ENCODE measurements at regions of chr3 and their contacts with region 1.

Region 1: DNA sequence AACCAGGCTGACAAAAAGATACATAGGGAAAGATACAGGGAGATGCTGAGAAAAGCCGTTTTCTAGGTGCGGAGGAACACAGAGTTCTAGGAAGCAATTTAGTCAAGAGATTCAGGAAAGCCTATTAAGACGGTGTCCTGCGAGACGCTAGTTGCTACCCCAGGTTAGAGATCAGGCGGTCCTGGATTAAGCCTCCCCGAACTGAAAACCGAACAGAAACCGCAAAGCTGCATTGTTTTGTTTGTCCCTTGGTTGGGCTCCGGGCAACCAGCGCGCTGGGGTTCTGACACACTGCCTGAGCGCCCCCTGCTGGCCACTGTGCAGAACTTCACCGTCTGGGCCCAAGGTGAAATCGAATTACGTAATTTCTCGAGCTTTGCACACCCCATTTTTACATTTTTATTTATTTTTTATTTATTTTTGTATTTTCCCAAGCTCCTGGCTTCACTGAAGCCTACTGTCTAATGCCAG is 37.3 kb upstream of the NDUFB4 start:
- DNase-seq: peak; percentile 87
- H3K4me3 ChIP-seq: peak overlapping the region; percentile 39 to 85 (median 49)
- H3K27ac ChIP-seq: peak overlapping the region; percentile 96
- H3K4me1 ChIP-seq: peaks cover 26% of the 10 kb centered on the region
- H3K27me3 ChIP-seq: no peaks in the 10 kb centered on the region
- CTCF ChIP-seq: peak; percentile 94
- POLR2A ChIP-seq: no peak

Region 2: DNA sequence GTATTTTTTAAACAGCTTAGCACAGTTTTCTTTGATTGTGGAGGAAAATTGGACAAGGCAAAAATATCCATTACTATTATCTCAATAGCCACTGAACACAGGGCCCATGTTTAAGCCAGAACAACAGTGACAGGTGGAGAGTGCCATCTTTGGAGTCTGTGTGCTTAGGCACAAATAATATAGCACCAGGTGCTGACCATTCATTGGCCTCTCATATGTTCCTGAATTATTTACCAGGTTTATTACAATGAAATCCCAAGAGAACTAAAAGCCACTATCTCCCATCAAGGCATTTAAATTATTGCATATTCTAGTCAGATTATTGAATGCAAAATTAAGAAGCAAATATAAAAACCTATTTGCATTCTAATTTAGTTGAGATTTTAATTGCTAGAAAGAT is 313.4 kb before region 1 on chr3:
- CTCF ChIA-PET with region 1: interaction called, 122 read pairs
- POLR2A ChIA-PET with region 1: no interaction called
- dilution Hi-C with region 1: no loop called
- intact Hi-C with region 1: loop called (anchors 1 kb)
- DNase-seq: no peak
- H3K4me3 ChIP-seq: no peak overlapping the region
- H3K27ac ChIP-seq: no peak overlapping the region
- H3K4me1 ChIP-seq: no peaks in the 10 kb centered on the region
- H3K27me3 ChIP-seq: peaks cover 10 to 21% of the 10 kb centered on the region in 2 experiments
- CTCF ChIP-seq: no peak
- POLR2A ChIP-seq: no peak

Region 3: GRCh38 chr3:120417272-120417911 is 141.4 kb before region 1 on chr3:
- CTCF ChIA-PET with region 1: interaction called, 246 read pairs
- POLR2A ChIA-PET with region 1: interaction called, 10 read pairs
- dilution Hi-C with region 1: no loop called
- intact Hi-C with region 1: loop called (anchors 1 kb)
- DNase-seq: peak; percentile 100
- H3K4me3 ChIP-seq: peak overlapping the region in 2 of 3 experiments; percentile 12 to 24
- H3K27ac ChIP-seq: peak overlapping the region; percentile 75
- H3K4me1 ChIP-seq: peaks cover 29% of the 10 kb centered on the region
- H3K27me3 ChIP-seq: no peaks in the 10 kb centered on the region
- CTCF ChIP-seq: peak; percentile 79 to 96
- POLR2A ChIP-seq: no peak

Region 4: DNA sequence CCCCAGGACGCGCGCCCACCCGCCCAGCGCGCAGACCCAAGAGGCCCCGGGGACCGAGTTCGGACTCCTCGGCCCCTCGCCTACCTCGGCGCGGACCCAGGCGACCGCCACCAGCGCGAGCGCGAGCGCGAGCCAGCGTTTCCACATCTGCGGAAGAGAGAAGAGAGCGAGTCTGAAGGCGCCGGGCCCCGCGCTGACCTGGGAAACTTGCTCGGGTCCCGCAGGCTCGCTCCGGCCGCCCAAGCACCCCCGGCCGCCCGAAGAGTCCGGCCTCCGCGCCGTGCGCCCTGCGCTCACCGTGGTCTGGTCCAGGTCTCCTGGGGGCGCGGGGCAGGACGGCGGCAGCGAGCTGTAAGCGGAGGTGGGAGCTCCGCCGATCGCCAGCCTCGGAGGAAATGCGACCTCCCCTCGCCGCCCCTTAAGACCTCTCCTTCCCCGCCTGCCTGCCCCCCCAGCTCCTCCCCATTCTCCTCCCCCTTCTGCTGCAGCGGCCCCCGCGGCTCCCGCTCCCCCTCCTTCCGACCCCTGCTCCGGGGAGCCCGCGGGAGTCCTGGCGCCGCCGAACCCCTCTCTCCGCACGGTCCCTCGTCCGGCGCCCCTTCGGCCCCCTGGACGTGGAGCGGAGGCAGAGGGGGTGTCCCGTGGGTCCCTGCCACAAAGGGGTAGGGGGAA is 108.1 kb before region 1 on chr3 and contains the start of gene FSTL1:
- CTCF ChIA-PET with region 1: interaction called, 31 read pairs
- POLR2A ChIA-PET with region 1: no interaction called
- dilution Hi-C with region 1: no loop called
- intact Hi-C with region 1: no loop called
- DNase-seq: peak; percentile 67
- H3K4me3 ChIP-seq: peak within 1 kb of the TSS; percentile 70 to 95 (median 92)
- H3K27ac ChIP-seq: peak within 1 kb of the TSS; percentile 89
- H3K4me1 ChIP-seq: peaks cover 22% of the 10 kb centered on the region
- H3K27me3 ChIP-seq: no peaks in the 10 kb centered on the region
- CTCF ChIP-seq: no peak
- POLR2A ChIP-seq: peak; percentile 95
- total RNA-seq, gene FSTL1: 522 and 562 TPM in 2 replicates

Region 5: DNA sequence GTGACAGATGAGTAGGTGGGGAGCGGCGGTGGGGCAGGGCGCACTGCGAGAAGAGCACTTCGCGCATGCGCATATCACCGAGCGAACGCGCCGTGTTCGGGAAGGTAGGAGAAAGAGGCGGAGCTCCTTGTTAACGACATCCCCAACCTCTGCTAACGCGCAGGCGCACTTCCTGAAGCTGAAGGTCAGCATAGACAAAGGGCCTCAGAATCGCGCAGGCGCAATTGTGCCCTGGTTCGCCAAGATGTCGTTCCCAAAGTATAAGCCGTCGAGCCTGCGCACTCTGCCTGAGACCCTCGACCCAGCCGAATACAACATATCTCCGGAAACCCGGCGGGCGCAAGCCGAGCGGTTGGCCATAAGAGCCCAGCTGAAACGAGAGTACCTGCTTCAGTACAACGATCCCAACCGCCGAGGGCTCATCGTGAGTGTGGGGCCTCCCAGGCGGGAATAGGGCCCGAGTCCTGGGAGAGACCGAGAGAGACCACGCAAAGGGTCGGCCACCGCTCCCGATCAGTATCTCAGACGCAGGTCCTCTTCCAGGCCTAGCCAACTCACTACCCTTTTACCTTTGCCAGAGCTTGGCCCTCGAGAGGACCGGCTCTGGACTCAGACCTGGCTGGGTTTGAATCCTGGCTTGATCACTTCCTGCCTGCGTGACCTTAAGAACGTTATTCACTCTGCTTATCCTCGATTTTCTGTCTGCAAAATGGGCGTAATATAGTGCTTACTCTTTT is 37.5 kb after region 1 on chr3 and contains the start of gene NDUFB4:
- CTCF ChIA-PET with region 1: interaction called, 8 read pairs
- POLR2A ChIA-PET with region 1: no interaction called
- dilution Hi-C with region 1: no loop called
- intact Hi-C with region 1: loop called (anchors 1 kb)
- DNase-seq: peak; percentile 99
- H3K4me3 ChIP-seq: peak within 1 kb of the TSS; percentile 50 to 88 (median 81)
- H3K27ac ChIP-seq: peak within 1 kb of the TSS; percentile 83
- H3K4me1 ChIP-seq: peaks cover 6% of the 10 kb centered on the region
- H3K27me3 ChIP-seq: no peaks in the 10 kb centered on the region
- CTCF ChIP-seq: no peak
- POLR2A ChIP-seq: peak; percentile 95
- total RNA-seq, gene NDUFB4: 140 TPM in 2 replicates

Region 6: DNA sequence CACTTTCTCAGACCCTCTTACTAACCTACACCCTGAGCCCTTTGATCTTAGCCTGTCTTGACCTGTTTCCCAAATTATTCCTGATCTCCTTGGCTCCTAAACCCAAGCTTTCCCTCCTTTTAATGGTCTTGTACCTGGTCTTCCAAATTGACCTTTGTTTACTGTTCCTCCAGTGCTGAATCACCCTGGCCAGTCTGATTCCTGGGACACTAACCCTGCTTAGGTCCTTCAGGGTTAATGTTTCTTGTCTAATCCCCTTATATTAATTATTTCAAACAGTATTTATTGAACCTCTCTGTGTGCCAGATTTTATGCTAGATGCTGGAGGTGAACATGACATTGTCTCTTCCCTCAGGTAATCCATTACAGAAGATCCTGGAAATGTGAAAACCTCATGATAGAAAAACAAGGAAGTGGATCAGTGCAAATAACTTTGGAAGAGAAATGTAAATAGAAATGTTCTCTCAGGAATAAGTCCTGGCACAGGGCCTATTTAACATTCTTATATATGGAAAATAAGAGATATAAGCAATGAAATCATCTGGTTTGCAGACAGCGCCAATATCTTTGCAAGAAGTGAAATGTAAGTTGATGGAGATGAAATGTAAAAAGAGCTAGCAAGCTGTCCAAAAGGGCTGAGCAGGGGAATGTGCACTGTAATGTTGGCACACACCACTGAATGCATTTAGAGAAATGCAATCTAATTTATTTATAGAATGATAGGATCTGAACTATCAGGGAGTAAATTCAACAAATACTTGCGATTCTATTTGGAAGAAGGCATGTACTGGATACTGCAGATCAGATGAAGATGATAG is 102.5 kb after region 1 on chr3:
- CTCF ChIA-PET with region 1: no interaction called
- POLR2A ChIA-PET with region 1: no interaction called
- dilution Hi-C with region 1: no loop called
- intact Hi-C with region 1: no loop called
- DNase-seq: no peak
- H3K4me3 ChIP-seq: no peak overlapping the region
- H3K27ac ChIP-seq: no peak overlapping the region
- H3K4me1 ChIP-seq: no peaks in the 10 kb centered on the region
- H3K27me3 ChIP-seq: no peaks in the 10 kb centered on the region
- CTCF ChIP-seq: no peak
- POLR2A ChIP-seq: no peak

Region 7: GRCh38 chr3:120908030-120908794 is 349.4 kb after region 1 on chr3 and contains the start of gene STXBP5L:
- CTCF ChIA-PET with region 1: no interaction called
- POLR2A ChIA-PET with region 1: no interaction called
- dilution Hi-C with region 1: no loop called
- intact Hi-C with region 1: loop called (anchors 2 kb)
- DNase-seq: peak; percentile 83
- H3K4me3 ChIP-seq: peak within 1 kb of the TSS; percentile 5 to 60 (median 26)
- H3K27ac ChIP-seq: no peak within 1 kb of the TSS
- H3K4me1 ChIP-seq: peaks cover 9% of the 10 kb centered on the region
- H3K27me3 ChIP-seq: peaks cover 15 to 33% of the 10 kb centered on the region in 2 experiments
- CTCF ChIP-seq: no peak
- POLR2A ChIP-seq: no peak
- total RNA-seq, gene STXBP5L: not detected in 2 replicates